ENCODE measurements at regions of chr1 and their contacts with region 1.

Region 1: GRCh38 chr1:28668191-28668955 is at the start of gene GMEB1:
- DNase-seq: peak; percentile 73
- ATAC-seq: peak; percentile 65
- H3K4me3 Mint-ChIP-seq: peak within 1 kb of the TSS; percentile 92
- H3K27ac Mint-ChIP-seq: peak within 1 kb of the TSS; percentile 97
- H3K4me1 Mint-ChIP-seq: peaks cover 17% of the 10 kb centered on the region
- H3K27me3 Mint-ChIP-seq: no peaks in the 10 kb centered on the region
- CTCF ChIP-seq: no peak
- total RNA-seq, gene GMEB1: 26.8 and 27.4 TPM in 2 replicates

Region 2: GRCh38 chr1:28775121-28775944 is 107.0 kb after region 1 on chr1:
- CTCF ChIA-PET with region 1: no interaction called
- POLR2A ChIA-PET with region 1: interaction called, 12 read pairs
- intact Hi-C with region 1: no loop called
- DNase-seq: peak; percentile 62
- ATAC-seq: peak; percentile 95
- H3K4me3 Mint-ChIP-seq: peak overlapping the region; percentile 87
- H3K27ac Mint-ChIP-seq: peak overlapping the region; percentile 61
- H3K4me1 Mint-ChIP-seq: peaks cover 10% of the 10 kb centered on the region
- H3K27me3 Mint-ChIP-seq: no peaks in the 10 kb centered on the region
- CTCF ChIP-seq: no peak

Measured in activated B cell treated with CpG ODN at 0.5 μM for 24 hours (primary cell).